ENCODE measurements at regions of chrX and their contacts with region 1.

Region 1: GRCh38 chrX:28910487-28910886 is 323.2 kb downstream of the IL1RAPL1 start:
- DNase-seq: no peak
- ATAC-seq: no peak
- H3K4me3 ChIP-seq: no peak overlapping the region
- H3K27ac ChIP-seq: no peak overlapping the region
- H3K4me1 ChIP-seq: no peaks in the 10 kb centered on the region
- H3K27me3 ChIP-seq: no peaks in the 10 kb centered on the region

Region 2: GRCh38 chrX:28628120-28628519 is 282.4 kb before region 1 on chrX:
- intact Hi-C with region 1: no loop called
- DNase-seq: no peak
- ATAC-seq: no peak
- H3K4me3 ChIP-seq: no peak overlapping the region
- H3K27ac ChIP-seq: peak overlapping the region; percentile 19
- H3K4me1 ChIP-seq: no peaks in the 10 kb centered on the region
- H3K27me3 ChIP-seq: no peaks in the 10 kb centered on the region

Region 3: GRCh38 chrX:28960064-28960463 is 49.6 kb after region 1 on chrX:
- intact Hi-C with region 1: no loop called
- DNase-seq: no peak
- ATAC-seq: no peak
- H3K4me3 ChIP-seq: no peak overlapping the region
- H3K27ac ChIP-seq: no peak overlapping the region
- H3K4me1 ChIP-seq: no peaks in the 10 kb centered on the region
- H3K27me3 ChIP-seq: no peaks in the 10 kb centered on the region

Region 4: DNA sequence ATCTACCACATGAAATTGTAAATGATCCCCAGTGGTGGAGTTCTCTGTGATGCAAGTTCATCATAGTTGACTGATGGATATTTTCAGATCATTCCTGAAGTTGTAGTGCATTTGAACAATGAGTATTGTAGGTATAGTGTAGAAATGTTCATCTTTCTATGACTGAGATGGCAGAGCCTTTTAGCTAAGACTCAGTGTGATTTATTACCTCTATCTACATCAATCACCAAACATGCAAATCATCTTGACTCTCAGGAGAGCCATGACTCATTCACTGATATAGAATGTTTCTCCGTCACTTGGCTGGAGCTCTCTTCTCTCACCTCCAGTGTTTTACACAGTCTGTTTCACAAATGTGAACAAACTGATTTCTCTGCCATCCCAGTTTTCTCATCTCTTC is 69.4 kb after region 1 on chrX:
- intact Hi-C with region 1: loop called in 1 of 4 experiments (anchors 10 kb)
- DNase-seq: no peak
- ATAC-seq: no peak
- H3K4me3 ChIP-seq: no peak overlapping the region
- H3K27ac ChIP-seq: no peak overlapping the region
- H3K4me1 ChIP-seq: no peaks in the 10 kb centered on the region
- H3K27me3 ChIP-seq: no peaks in the 10 kb centered on the region